ENCODE measurements at regions of chr13 and their contacts with region 1.

Region 1: GRCh38 chr13:45280751-45281634 is 60.0 kb downstream of the TPT1 start:
- DNase-seq: peak; percentile 83
- H3K4me3 ChIP-seq: no peak overlapping the region
- H3K27ac ChIP-seq: peak overlapping the region in 3 of 4 donors; percentile 24 to 37 (median 37)
- H3K4me1 ChIP-seq: peaks cover 0 to 24% (median 13%) of the 10 kb centered on the region in 4 donors
- H3K27me3 ChIP-seq: no peaks in the 10 kb centered on the region
- CTCF ChIP-seq: peak; percentile 67 to 75 (median 72)
- EP300 ChIP-seq: no peak
- POLR2A ChIP-seq: no peak

Region 2: GRCh38 chr13:45047394-45048310 is 233.3 kb before region 1 on chr13:
- intact Hi-C with region 1: loop called (anchors 1 kb)
- DNase-seq: peak; percentile 87
- H3K4me3 ChIP-seq: peak overlapping the region; percentile 23 to 47 (median 47)
- H3K27ac ChIP-seq: peak overlapping the region in 3 of 4 donors; percentile 12 to 53 (median 43)
- H3K4me1 ChIP-seq: peaks cover 0 to 13% (median 6%) of the 10 kb centered on the region in 4 donors
- H3K27me3 ChIP-seq: no peaks in the 10 kb centered on the region
- CTCF ChIP-seq: peak; percentile 87 to 95 (median 92)
- EP300 ChIP-seq: no peak
- POLR2A ChIP-seq: no peak

Region 3: GRCh38 chr13:45055198-45055901 is 225.6 kb before region 1 on chr13:
- intact Hi-C with region 1: loop called (anchors 2 kb)
- DNase-seq: peak; percentile 66
- H3K4me3 ChIP-seq: no peak overlapping the region
- H3K27ac ChIP-seq: peak overlapping the region; percentile 52 to 79 (median 74)
- H3K4me1 ChIP-seq: peaks cover 0 to 30% (median 22%) of the 10 kb centered on the region in 4 donors
- H3K27me3 ChIP-seq: no peaks in the 10 kb centered on the region
- CTCF ChIP-seq: no peak
- EP300 ChIP-seq: no peak
- POLR2A ChIP-seq: no peak

Region 4: DNA sequence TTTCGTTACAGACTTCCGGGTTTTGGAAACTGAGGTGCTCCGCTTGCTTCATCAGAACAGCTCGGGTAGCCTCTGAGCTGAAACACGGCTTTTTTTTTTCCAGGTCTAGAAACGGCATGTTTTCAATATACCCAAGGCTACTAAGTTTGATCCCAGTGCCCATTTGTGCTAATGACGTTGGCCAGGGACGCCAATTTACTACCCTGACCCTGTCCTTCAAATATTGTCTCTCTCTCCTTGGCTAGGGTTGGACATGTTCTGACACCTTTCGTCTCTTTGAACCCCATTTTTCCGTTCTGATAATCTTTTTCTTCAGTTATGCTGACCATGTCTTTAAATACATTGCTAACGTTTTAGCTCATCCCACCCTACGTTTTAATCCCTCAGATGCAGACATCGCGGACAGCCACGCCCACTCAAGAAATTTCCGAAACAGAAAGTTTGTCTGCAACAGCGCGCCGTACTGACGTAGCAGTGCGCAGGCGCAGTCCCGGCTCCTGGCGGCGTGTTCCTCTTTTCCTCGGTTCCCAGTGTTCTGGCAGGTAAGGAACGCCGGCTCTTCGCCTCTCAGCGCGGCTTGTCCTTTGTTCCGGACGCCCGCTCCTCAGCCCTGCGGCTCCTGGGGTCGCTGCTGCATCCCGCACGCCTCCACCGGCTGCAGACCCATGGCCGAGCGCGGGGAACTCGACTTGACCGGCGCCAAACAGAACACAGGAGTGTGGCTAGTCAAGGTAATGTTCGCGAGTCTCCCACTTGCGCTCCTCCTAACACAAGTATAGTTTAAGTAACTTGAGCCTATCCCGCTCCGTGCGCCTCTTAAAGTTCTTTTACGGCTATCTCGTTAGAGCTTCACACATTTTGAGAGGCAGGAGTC is 160.8 kb before region 1 on chr13 and contains the start of gene GTF2F2:
- intact Hi-C with region 1: loop called (anchors 2 kb)
- DNase-seq: peak; percentile 96
- H3K4me3 ChIP-seq: peak within 1 kb of the TSS; percentile 68 to 85 (median 76)
- H3K27ac ChIP-seq: peak within 1 kb of the TSS; percentile 78 to 84 (median 82)
- H3K4me1 ChIP-seq: peaks cover 0 to 27% (median 26%) of the 10 kb centered on the region in 4 donors
- H3K27me3 ChIP-seq: no peaks in the 10 kb centered on the region
- CTCF ChIP-seq: peak in 1 of 4 experiments; percentile 7
- EP300 ChIP-seq: peak in 2 of 4 donors; percentile 38 to 53
- POLR2A ChIP-seq: peak; percentile 21 to 29
- total RNA-seq, gene GTF2F2: 28.5 to 32.7 (median 30.1) TPM

Region 5: DNA sequence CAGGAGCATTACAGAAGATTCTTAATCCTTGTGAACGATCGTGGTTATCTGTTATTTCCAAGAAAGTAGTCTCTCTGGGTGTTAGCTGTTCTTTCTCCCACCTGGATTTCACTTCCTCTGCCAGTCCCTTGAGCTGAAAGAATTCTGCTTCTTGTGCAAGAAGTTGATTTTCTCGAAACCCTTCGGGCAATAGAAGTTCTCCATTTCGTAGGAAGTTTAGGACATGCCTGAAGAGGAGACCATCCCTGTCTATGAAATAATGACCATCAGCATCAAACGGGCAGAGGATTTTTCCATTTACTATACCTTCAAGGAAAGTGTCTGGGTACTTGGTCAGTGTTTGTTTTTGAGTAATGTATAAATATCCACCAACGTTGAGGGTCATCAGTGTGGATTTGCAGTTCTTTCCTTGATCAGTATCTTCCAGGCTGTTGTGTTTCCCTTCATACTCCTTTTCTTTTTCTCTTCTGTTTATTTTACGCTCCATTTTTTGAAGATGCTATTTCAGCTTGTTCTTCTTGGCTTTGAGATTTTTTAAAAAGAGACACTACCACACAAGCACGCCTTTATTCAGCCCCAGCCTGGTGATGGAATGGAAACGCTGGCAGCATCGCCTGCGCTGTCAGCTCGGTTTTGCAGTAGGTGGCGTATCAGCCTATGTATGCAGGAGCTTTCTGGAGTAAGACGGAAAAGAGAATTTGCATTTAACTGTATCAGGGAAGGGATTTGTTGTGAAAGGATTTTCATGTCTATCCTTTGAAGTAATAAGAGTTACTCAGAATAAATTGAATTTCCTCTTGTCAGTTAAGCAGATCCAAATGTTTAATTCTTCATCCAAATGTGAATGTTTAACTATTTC is 86.7 kb before region 1 on chr13:
- intact Hi-C with region 1: loop called (anchors 1 kb)
- DNase-seq: peak; percentile 81
- H3K4me3 ChIP-seq: peak overlapping the region in 2 of 4 donors; percentile 16 to 21
- H3K27ac ChIP-seq: peak overlapping the region in 3 of 4 donors; percentile 18 to 46 (median 29)
- H3K4me1 ChIP-seq: peaks cover 0 to 67% (median 41%) of the 10 kb centered on the region in 4 donors
- H3K27me3 ChIP-seq: no peaks in the 10 kb centered on the region
- CTCF ChIP-seq: peak; percentile 46 to 57 (median 55)
- EP300 ChIP-seq: no peak
- POLR2A ChIP-seq: no peak

Region 6: DNA sequence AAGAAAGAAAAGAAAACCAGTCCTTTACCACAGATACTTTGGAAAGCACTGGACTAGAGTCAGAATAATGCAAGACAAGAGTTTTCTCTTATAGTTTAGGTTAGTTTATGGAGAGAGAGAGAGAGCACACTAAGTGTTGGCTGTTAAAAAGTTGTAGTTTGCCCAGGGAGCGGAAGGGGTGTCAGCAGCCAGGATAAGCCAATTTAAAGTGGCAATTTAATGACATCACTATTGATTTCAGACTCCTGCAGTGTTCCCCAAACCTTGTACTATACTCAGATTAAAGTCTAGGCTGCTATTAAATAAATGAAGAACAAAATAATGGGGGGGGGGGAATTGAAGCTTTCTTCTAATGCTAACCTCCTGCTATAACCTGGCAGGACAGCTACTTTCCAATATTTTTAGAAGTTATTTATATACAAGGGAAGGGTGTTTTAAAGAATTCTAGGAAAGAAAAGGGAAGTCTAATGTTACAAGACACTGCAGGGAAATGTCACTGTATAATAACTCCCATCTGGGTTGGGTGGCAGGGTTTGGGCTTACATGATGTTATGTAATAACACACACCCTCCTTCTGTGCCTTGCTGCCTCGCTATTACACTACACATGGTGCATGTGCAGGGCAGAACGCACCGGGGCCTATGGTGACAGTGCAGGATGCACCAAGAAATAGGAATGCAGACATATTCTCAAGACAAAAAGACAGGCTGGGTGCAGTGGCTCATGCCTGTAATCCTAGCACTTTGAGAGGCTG is 40.1 kb after region 1 on chr13:
- intact Hi-C with region 1: no loop called
- DNase-seq: no peak
- H3K4me3 ChIP-seq: no peak overlapping the region
- H3K27ac ChIP-seq: no peak overlapping the region
- H3K4me1 ChIP-seq: peaks cover 0 to 13% (median 6%) of the 10 kb centered on the region in 4 donors
- H3K27me3 ChIP-seq: no peaks in the 10 kb centered on the region
- CTCF ChIP-seq: no peak
- EP300 ChIP-seq: no peak
- POLR2A ChIP-seq: no peak

Measured in sigmoid colon (tissue), 7 donors.